ENCODE measurements at regions of chr10 and their contacts with region 1.

Region 1: DNA sequence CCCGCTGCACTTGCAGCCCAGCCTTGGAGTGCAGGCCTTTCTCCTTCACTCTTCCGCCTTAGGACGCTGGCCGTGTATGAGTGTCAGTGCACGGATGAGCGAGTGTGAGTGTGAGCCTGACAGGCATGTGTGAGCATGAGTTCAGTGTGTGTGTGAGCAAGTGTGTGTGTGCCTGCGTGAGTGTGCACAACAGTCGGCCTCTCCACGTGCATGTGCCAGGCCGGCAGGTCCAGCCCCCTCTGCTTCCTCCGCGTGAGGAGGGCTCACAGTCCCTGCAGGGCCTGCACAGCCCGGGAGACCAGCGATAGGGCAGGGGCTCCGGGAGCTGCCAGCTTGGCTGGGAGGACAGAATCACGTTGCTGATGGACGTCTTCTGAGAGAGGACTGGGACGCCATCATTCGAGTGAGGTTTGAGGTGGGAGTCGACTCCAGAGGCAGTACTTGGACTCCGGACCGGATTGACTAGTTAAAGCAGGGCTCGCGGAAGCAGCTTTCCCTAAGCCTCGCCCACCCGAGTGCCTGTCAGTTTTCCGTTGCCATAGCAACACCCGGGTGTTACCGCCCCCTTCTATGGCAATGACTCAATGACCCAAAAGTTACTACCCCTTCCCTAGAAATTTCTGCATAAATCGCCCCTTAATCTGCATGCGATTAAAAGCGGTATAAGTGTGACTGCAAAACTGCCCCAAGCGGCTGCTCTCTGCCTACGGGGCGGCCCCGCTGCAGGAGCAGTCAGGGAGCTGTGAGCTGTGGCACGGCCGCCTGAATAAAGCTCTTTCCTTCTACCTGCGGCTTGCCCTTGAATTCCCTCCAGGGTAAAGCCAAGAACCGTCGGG is 19.6 kb upstream of the CFAP46 start:
- DNase-seq: peak; percentile 90
- ATAC-seq: peak; percentile 82
- H3K4me3 Mint-ChIP-seq: peak overlapping the region; percentile 73
- H3K27ac Mint-ChIP-seq: peak overlapping the region; percentile 71
- H3K4me1 Mint-ChIP-seq: peaks cover 26% of the 10 kb centered on the region
- H3K27me3 Mint-ChIP-seq: peaks cover 26% of the 10 kb centered on the region

Region 2: DNA sequence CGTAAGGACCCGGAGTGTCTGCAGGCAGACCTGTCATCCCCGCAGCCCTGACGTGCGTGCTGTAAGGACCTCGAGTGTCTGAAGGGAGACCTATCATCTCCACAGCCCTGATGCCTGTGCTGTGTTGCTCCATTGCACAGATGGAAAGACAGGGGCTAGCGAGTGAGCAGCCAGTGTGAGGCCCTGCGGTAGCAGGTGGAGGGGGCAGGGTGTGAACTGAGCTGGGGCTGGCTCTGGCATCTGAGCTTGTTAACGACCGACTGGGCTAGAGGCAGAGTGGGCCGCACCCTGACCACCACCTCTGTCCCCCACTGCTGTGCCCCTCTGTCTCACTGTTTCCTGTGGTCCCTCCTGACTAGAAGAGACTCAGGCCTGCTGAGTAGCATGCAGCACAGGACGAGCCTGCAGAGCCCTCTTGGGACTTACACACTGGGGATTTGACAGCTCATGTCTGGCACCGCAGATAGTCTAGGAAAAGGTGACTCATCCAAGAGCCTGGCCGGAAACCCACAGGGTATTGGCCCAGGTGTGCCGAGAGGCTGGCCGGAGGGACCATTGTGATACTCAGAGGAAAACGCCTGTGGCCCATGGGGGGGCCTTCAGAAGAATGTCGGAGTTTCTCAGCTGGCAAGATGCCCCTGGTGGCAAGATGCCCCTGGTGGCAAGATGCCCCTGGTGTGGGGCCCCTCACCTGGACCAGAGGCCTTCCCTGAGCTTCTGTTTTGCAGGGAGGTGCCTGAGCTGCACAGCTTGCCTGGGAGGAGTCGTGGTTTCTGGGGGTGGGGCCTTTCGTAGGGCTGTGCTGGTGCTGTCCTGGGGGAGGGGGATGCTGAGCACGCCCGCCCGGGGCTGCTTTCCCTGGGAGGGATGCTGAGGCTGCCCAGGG is 390.1 kb before region 1 on chr10:
- CTCF ChIA-PET with region 1: no interaction called
- POLR2A ChIA-PET with region 1: no interaction called
- intact Hi-C with region 1: loop called in 1 of 2 experiments (anchors 5 kb)
- DNase-seq: peak; percentile 83
- ATAC-seq: peak; percentile 85
- H3K4me3 Mint-ChIP-seq: peak overlapping the region; percentile 15
- H3K27ac Mint-ChIP-seq: no peak overlapping the region
- H3K4me1 Mint-ChIP-seq: peaks cover 33% of the 10 kb centered on the region
- H3K27me3 Mint-ChIP-seq: no peaks in the 10 kb centered on the region

Region 3: GRCh38 chr10:132904181-132904819 is 57.7 kb before region 1 on chr10:
- CTCF ChIA-PET with region 1: no interaction called
- POLR2A ChIA-PET with region 1: no interaction called
- intact Hi-C with region 1: loop called in 1 of 2 experiments (anchors 2 kb)
- DNase-seq: peak; percentile 75
- ATAC-seq: peak; percentile 69
- H3K4me3 Mint-ChIP-seq: no peak overlapping the region
- H3K27ac Mint-ChIP-seq: no peak overlapping the region
- H3K4me1 Mint-ChIP-seq: peaks cover 14% of the 10 kb centered on the region
- H3K27me3 Mint-ChIP-seq: peaks cover 13% of the 10 kb centered on the region

Region 4: DNA sequence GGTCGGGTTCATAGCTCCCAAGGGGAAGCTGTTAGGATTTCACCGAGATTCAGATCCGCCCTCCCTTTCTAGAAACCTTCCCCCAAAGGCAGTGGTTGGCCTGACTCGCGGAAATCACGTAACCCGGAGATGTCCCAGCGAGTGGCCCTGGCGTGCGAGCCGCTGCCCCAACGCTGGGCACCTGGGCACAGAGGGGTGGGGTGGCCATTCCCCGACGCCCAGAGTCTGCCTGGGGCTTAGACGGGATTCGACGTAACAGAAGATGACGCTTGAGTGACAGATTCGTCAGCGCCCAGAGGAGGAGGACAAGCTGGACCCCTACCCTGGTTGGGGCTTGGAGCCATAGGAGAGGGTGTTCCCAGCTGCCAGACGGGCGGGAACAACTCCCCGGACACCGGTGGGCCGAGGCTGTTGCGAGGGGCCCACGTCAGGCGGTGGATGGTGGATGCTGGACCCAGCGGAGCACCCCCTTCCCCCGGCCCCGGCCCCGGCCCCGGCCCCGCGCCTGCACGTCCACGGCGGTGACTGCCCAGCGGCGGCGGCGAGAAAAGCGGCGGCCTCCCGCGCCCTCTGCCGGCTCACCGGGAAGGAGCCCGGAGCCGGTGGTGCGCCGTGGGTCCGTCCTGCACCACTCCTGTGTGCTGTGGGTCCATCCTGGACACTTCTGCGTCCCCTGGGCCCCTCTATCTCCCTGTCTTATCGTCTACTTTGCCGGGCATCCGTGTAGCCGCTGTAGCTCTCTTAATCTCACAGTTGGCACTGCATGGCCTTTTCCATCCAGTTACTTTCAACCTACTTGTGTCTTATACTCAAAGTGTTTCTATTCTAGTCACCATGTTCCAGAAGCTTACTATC is 162.6 kb after region 1 on chr10:
- CTCF ChIA-PET with region 1: interaction called, 3 read pairs
- POLR2A ChIA-PET with region 1: no interaction called
- intact Hi-C with region 1: loop called in 1 of 2 experiments (anchors 2 kb)
- DNase-seq: peak; percentile 54
- ATAC-seq: peak; percentile 31
- H3K4me3 Mint-ChIP-seq: no peak overlapping the region
- H3K27ac Mint-ChIP-seq: no peak overlapping the region
- H3K4me1 Mint-ChIP-seq: peaks cover 8% of the 10 kb centered on the region
- H3K27me3 Mint-ChIP-seq: peaks cover 19% of the 10 kb centered on the region

Region 5: DNA sequence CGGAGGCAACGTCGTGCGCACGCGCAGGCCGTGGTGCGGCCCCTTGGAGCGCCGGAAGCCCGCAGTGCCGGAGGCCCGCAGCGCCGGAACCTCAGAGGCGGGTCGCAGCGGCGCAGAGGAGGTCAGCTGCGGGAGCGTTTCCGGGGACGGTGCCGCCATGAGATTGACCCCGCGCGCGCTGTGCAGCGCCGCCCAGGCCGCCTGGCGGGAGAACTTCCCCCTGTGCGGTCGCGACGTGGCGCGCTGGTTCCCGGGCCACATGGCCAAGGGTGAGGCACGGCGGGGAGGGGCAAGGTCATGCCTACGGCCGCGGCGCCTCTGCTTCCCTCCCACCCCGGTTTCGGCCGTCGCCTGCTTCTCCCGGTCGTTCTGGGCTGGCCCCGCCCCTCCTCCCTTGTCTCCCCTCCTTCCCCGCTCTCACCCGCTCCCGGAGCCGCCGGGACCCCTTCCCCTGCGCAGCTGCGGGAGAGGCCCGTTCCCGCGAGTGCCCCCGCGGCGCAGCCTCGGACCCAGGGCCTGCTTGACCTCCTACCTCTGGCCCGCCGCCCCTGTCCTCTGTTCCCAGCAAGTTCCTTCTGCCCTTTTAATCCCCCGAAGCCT is 432.2 kb after region 1 on chr10 and contains the start of gene MTG1:
- CTCF ChIA-PET with region 1: no interaction called
- POLR2A ChIA-PET with region 1: no interaction called
- intact Hi-C with region 1: loop called in 1 of 2 experiments (anchors 5 kb)
- DNase-seq: peak; percentile 97
- ATAC-seq: peak; percentile 76
- H3K4me3 Mint-ChIP-seq: peak within 1 kb of the TSS; percentile 90
- H3K27ac Mint-ChIP-seq: peak within 1 kb of the TSS; percentile 93
- H3K4me1 Mint-ChIP-seq: peaks cover 51% of the 10 kb centered on the region
- H3K27me3 Mint-ChIP-seq: no peaks in the 10 kb centered on the region
- total RNA-seq, gene MTG1: 46.9 to 52.1 TPM